ENCODE measurements at regions of chr2 and their contacts with region 1.

Region 1: DNA sequence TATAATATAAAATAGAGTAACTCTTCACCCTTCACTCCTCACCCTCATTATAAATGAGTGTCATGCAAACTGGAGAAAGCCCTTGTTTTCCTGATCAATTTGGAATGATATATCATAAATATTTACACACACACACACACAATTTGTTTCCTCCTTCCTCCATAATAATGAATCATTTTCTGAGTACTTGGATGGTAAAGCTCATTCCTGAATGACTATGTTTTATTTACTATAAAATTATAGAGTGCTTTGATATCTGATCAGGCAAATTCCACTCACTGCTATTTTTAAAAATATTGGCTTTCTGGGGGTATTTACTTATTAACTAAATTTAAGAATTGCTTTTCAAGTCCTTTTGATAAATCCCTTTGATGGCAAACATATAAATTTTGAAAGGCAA is 1125.5 kb upstream of the CNTNAP5 start:
- DNase-seq: no peak
- ATAC-seq: no peak
- H3K4me3 ChIP-seq: no peak overlapping the region
- H3K4me3 Mint-ChIP-seq: no peak overlapping the region
- H3K27ac ChIP-seq: no peak overlapping the region
- H3K27ac Mint-ChIP-seq: no peak overlapping the region
- H3K4me1 ChIP-seq: no peaks in the 10 kb centered on the region
- H3K4me1 Mint-ChIP-seq: no peaks in the 10 kb centered on the region
- H3K27me3 ChIP-seq: no peaks in the 10 kb centered on the region
- H3K27me3 Mint-ChIP-seq: no peaks in the 10 kb centered on the region
- CTCF ChIP-seq: no peak

Region 2: DNA sequence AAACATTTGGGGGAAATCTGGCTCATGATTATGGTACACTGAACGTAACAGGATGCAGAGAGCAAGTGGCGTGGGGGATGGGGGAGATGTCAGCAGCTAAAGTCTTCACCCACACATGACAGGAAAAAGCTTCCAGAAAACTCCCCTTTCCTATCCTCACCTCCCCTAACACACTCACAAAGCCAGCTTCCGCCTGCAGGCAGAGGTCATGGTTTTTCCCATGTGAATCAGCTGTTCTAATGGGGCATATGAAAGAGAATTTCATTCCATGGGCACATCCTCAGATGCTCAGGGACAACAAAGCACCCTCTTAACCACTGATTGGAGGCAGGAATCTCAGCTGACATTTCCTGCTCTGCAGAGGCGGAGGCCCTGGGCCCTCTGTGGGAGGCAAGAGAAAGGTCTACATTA is 1015.1 kb before region 1 on chr2:
- CTCF ChIA-PET with region 1: no interaction called
- POLR2A ChIA-PET with region 1: no interaction called
- intact Hi-C with region 1: no loop called
- DNase-seq: no peak
- ATAC-seq: no peak
- H3K4me3 ChIP-seq: no peak overlapping the region
- H3K4me3 Mint-ChIP-seq: no peak overlapping the region
- H3K27ac ChIP-seq: no peak overlapping the region
- H3K27ac Mint-ChIP-seq: no peak overlapping the region
- H3K4me1 ChIP-seq: no peaks in the 10 kb centered on the region
- H3K4me1 Mint-ChIP-seq: no peaks in the 10 kb centered on the region
- H3K27me3 ChIP-seq: no peaks in the 10 kb centered on the region
- H3K27me3 Mint-ChIP-seq: peaks cover 9% of the 10 kb centered on the region
- CTCF ChIP-seq: no peak

Region 3: GRCh38 chr2:122670897-122671296 is 228.7 kb before region 1 on chr2:
- CTCF ChIA-PET with region 1: no interaction called
- POLR2A ChIA-PET with region 1: no interaction called
- intact Hi-C with region 1: no loop called
- DNase-seq: no peak
- ATAC-seq: no peak
- H3K4me3 ChIP-seq: no peak overlapping the region
- H3K4me3 Mint-ChIP-seq: no peak overlapping the region
- H3K27ac ChIP-seq: no peak overlapping the region
- H3K27ac Mint-ChIP-seq: no peak overlapping the region
- H3K4me1 ChIP-seq: no peaks in the 10 kb centered on the region
- H3K4me1 Mint-ChIP-seq: no peaks in the 10 kb centered on the region
- H3K27me3 ChIP-seq: no peaks in the 10 kb centered on the region
- H3K27me3 Mint-ChIP-seq: no peaks in the 10 kb centered on the region
- CTCF ChIP-seq: no peak

Region 4: DNA sequence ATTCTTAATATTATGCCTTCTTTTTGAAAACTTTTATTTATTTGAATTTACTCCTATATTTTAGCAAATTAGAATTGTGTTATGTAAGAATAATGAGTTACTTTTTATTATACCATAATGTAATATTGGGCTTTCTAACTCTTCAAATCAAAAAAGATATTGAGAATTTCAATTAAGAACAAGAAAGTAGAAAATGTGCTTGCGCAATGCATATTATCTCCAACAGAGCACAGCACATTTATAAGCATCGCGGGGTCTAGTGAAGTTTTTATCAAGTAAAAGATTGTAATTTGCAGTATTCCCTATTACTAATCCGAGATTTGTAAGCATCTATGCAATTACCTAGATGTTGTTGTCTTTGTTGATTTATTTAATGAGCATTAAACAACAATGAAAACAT is 296.3 kb after region 1 on chr2:
- CTCF ChIA-PET with region 1: no interaction called
- POLR2A ChIA-PET with region 1: no interaction called
- intact Hi-C with region 1: loop called in 1 of 2 experiments (anchors 5 kb)
- DNase-seq: no peak
- ATAC-seq: no peak
- H3K4me3 ChIP-seq: no peak overlapping the region
- H3K4me3 Mint-ChIP-seq: no peak overlapping the region
- H3K27ac ChIP-seq: no peak overlapping the region
- H3K27ac Mint-ChIP-seq: no peak overlapping the region
- H3K4me1 ChIP-seq: no peaks in the 10 kb centered on the region
- H3K4me1 Mint-ChIP-seq: no peaks in the 10 kb centered on the region
- H3K27me3 ChIP-seq: no peaks in the 10 kb centered on the region
- H3K27me3 Mint-ChIP-seq: no peaks in the 10 kb centered on the region
- CTCF ChIP-seq: no peak

Measured in CD8-positive, alpha-beta T cell (primary cell).